Ascending aorta (tissue), 2 donors: ENCODE measurements at regions of chr10 and their contacts with region 1.

Region 1: DNA sequence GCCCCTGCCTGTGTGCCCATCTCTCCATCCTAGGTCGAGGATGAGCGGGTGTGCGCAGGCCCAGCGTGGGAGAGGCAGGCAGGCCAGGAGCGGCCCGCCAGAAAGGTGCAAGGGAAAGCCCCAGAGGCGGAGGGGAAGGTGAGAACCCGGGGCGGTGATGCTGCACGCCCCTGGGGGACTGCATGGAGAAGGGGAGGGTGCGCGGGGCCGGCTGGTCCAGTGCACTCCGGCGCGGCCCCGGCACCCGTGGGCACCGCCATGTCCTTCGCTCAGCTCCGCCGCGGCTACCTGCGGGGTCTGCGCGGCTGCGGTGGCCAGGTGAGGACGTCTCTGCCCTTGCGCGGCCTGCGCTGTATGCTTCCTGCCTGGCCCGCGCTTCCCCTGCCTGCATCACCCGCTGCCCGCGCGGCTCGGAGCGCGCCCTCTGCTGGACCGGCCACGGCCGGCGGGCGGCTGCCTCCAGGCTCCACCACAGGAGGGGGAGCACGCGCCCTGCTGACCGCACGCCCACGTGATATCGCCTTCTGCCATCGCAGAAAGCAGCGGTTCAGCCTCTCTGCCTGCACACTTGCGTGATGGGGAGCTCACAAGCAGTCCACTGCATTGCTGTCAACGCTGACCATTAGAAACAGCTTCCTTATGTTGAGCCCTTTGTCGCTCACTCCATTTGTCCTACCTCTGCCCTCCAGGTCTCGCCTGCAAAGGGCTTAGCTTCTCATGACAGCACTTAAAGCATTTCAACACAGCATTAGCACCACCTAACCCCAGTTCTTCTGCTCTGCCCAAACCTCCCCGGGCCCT is 73.9 kb downstream of the CXCL12 start:
- DNase-seq: peak; percentile 40 to 92
- H3K4me3 ChIP-seq: peak overlapping the region; percentile 49 to 59
- H3K27ac ChIP-seq: no peak overlapping the region
- H3K4me1 ChIP-seq: peaks cover 0 to 5% of the 10 kb centered on the region in 2 donors
- H3K27me3 ChIP-seq: no peaks in the 10 kb centered on the region
- CTCF ChIP-seq: peak; percentile 94 to 97 (median 95)

Region 2: GRCh38 chr10:43754569-43755260 is 556.2 kb before region 1 on chr10:
- intact Hi-C with region 1: no loop called
- DNase-seq: no peak
- H3K4me3 ChIP-seq: no peak overlapping the region
- H3K27ac ChIP-seq: no peak overlapping the region
- H3K4me1 ChIP-seq: no peaks in the 10 kb centered on the region
- H3K27me3 ChIP-seq: no peaks in the 10 kb centered on the region
- CTCF ChIP-seq: no peak

Region 3: GRCh38 chr10:43965033-43965917 is 345.7 kb before region 1 on chr10:
- intact Hi-C with region 1: loop called (anchors 5 kb)
- DNase-seq: peak in 1 of 2 donors; percentile 72
- H3K4me3 ChIP-seq: no peak overlapping the region
- H3K27ac ChIP-seq: peak overlapping the region; percentile 65 to 68
- H3K4me1 ChIP-seq: peaks cover 6 to 44% of the 10 kb centered on the region in 2 donors
- H3K27me3 ChIP-seq: no peaks in the 10 kb centered on the region
- CTCF ChIP-seq: no peak

Region 4: GRCh38 chr10:44071479-44071878 is 239.5 kb before region 1 on chr10:
- intact Hi-C with region 1: loop called (anchors 5 kb)
- DNase-seq: no peak
- H3K4me3 ChIP-seq: no peak overlapping the region
- H3K27ac ChIP-seq: peak overlapping the region in 1 of 2 donors; percentile 48
- H3K4me1 ChIP-seq: peaks cover 7 to 11% of the 10 kb centered on the region in 2 donors
- H3K27me3 ChIP-seq: no peaks in the 10 kb centered on the region
- CTCF ChIP-seq: no peak

Region 5: GRCh38 chr10:44386546-44387052 is 75.6 kb after region 1 on chr10:
- intact Hi-C with region 1: loop called (anchors 5 kb)
- DNase-seq: peak in 1 of 2 donors; percentile 77
- H3K4me3 ChIP-seq: peak overlapping the region in 1 of 2 donors; percentile 28
- H3K27ac ChIP-seq: no peak overlapping the region
- H3K4me1 ChIP-seq: peaks cover 0 to 8% of the 10 kb centered on the region in 2 donors
- H3K27me3 ChIP-seq: no peaks in the 10 kb centered on the region
- CTCF ChIP-seq: peak; percentile 86 to 95 (median 91)

Region 6: DNA sequence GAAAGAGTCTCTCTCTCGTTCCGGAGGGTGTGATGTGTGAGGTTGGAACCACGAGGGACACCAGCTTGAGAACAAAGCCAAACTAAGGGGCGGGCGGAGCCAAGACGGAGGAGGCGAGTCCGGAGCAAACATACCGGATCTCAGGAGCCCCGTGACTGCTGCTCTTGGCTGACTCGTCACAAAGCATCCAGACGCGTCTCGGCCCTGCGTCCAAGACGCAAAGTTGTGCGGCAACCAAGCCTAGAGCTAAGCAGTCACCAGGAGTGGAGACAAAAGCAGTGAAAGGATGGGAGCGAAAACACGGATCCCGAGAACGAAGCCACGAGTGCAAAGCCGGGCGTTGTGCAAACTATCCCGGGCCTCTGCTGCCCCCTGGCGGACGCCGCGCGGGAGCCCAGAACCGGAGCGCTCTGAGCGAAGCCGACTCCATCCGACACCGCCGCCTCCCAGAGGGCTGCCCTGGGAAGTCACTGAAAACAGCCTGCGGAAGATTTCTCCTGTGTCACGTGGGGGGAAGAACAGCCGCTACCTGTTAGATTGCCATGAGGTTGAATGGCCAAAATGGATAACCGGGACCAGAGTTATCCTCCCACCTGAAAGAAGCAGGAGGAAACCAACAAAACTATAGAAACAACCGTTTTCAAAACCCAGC is 553.8 kb after region 1 on chr10:
- intact Hi-C with region 1: loop called (anchors 5 kb)
- DNase-seq: peak in 1 of 2 donors; percentile 93
- H3K4me3 ChIP-seq: peak overlapping the region; percentile 51 to 68
- H3K27ac ChIP-seq: peak overlapping the region; percentile 29 to 58
- H3K4me1 ChIP-seq: peaks cover 0 to 14% of the 10 kb centered on the region in 2 donors
- H3K27me3 ChIP-seq: no peaks in the 10 kb centered on the region
- CTCF ChIP-seq: peak; percentile 91 to 99 (median 93)

Region 7: GRCh38 chr10:44895280-44895679 is 584.3 kb after region 1 on chr10:
- intact Hi-C with region 1: no loop called
- DNase-seq: no peak
- H3K4me3 ChIP-seq: no peak overlapping the region
- H3K27ac ChIP-seq: no peak overlapping the region
- H3K4me1 ChIP-seq: no peaks in the 10 kb centered on the region
- H3K27me3 ChIP-seq: no peaks in the 10 kb centered on the region
- CTCF ChIP-seq: no peak